ENCODE measurements at regions of chr2 and their contacts with region 1.

Region 1: DNA sequence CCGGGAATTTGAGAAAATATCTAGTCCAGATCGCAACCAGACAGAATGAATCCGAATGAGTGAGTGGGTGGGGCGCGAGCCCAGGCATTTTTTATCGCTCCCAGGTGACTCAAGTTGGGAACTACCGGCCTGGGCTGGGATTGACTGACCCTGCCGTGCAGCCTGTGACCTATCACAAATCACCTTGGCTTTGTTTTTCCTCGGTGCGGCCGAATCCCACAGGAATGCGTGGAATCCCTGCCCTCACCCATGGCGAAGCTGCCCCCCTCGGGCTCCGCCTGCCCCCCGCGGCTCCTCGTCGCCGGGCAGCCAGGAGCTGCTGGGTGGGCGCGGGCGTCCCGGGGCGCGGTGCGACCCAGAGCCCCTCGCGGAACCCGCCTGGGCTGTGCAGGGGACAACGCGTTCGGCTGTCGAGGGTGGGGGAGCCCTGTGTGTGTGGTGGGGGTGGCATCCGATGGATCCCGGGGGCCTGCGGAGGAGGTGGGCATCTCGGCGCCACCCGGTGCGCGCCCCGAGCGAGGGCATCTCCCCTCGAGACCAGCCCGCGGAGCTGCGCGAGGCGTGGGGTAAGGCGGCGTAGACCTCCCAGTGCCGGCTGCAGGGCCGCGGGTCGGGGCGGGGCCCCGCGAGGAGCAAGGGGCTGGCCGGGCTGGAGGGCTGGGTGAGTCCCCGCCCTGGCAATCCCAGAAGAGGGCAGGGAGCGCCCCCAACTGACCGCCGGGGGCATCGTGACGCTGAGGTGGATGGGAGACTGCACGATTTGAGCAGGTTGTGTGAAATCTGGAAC is 16.5 kb downstream of the B3GNT7 start:
- DNase-seq: peak; percentile 88 to 97
- H3K4me3 ChIP-seq: peak overlapping the region; percentile 46
- H3K4me1 ChIP-seq: peaks cover 37% of the 10 kb centered on the region
- H3K27me3 ChIP-seq: no peaks in the 10 kb centered on the region

Region 2: GRCh38 chr2:231104115-231104713 is 307.8 kb before region 1 on chr2:
- in situ Hi-C with region 1: loop called (anchors 5 kb)
- DNase-seq: peak; percentile 72 to 74
- H3K4me3 ChIP-seq: no peak overlapping the region
- H3K4me1 ChIP-seq: peaks cover 6% of the 10 kb centered on the region; the same call in 1 of the 2 replicates
- H3K27me3 ChIP-seq: no peaks in the 10 kb centered on the region

Region 3: DNA sequence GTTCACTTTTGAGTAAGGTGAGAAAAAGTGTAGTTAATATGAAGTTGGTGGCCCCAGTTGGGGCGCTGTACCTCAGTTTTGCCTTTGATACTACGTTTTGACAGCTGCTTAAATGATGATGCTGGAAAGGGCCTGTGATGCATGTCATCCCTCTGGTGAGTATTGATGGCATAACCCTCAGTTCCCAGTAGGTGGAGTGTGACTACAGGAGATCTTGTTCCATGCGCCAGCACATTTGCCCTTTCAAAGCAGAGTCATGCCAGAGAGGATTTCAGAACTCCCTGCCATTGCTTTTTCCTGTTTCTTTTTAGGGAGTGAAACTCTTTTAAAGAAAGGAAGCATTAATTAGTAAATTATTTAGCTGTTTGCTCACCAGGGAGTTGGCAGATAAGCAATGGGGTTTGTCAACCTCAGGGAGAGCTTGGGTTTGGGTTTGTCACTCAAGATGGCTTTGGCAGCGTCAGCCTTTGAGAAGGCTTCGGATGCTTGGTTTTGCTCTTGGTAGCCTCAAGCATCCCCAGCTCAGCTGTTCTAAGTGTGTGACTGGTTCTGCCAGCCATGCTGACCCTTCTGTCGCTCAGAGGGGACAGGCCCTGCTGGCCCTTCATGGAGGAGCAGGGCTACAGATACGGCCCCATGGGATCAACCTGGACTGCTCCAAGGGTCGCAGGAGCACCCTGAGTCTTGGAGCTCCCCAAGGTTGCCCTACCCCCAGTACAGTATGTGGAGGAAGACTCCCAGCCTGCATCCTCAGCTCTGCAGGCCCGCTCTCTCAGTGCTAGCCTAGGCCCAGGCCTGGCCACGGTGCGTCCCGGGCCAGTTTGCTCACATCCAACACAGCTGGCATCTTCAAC is 184.5 kb before region 1 on chr2:
- in situ Hi-C with region 1: loop called (anchors 5 kb)
- DNase-seq: peak; percentile 76 to 87
- H3K4me3 ChIP-seq: no peak overlapping the region
- H3K4me1 ChIP-seq: peaks cover 24% of the 10 kb centered on the region
- H3K27me3 ChIP-seq: no peaks in the 10 kb centered on the region

Region 4: DNA sequence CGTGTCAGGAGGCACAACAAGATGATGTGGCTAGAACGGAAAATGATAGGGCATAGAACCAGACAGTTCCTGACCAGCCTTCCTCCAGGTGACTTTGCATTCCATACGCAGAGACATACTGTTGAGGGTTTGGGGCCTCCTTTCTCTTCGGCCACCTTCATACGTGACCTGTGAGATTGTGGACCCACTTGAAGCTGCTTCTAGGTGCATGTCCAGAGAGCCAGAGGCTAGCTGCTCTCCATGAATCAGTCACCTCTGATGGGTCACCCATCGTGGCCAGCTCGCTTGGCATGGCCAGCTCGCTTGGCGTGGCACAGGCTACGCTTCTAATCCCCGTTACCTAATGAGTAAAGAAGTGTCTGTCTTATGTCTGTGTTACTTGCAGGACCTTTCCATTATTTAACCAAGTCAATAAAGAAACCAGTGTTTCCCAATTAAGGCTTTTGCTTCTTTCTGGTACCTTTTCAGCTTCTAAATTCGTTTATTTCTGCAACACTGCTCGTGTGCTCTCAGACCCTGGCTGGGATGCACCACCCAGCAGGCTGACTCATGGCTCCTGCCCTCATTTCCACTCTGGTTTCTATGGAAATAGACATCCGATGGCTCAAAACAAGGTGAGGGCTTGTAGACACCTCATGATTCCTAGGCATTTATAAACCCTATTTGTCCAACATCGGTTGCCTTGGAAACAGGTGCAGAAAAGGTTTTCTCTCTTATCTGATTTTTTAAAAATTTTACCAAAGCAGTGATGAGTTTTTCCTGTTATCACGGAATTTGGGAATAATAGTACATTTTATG is 103.2 kb before region 1 on chr2:
- in situ Hi-C with region 1: loop called (anchors 10 kb)
- DNase-seq: no peak
- H3K4me3 ChIP-seq: no peak overlapping the region
- H3K4me1 ChIP-seq: no peaks in the 10 kb centered on the region
- H3K27me3 ChIP-seq: no peaks in the 10 kb centered on the region

Region 5: DNA sequence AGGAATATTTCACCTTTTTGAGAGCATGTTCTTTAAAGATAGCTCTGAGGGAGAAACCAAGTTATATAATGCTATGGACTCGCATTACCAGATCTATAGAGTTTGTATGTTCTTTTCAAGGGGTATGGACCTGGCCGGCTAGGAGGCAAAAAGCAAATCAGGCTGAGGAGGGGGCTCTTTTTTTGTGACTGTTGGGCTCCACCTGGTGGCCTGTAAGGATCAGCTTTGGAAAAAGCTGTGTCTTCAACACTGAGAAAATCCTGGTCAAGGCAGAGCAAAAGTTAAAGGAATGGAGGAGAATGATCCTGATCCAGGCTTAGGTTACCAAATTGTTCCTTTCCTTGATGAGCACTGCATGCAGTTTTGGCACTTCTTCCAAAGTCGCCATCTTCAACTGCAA is 730.0 kb after region 1 on chr2:
- in situ Hi-C with region 1: no loop called
- DNase-seq: peak; percentile 51 to 62
- H3K4me3 ChIP-seq: no peak overlapping the region
- H3K4me1 ChIP-seq: no peaks in the 10 kb centered on the region
- H3K27me3 ChIP-seq: no peaks in the 10 kb centered on the region

Region 6: GRCh38 chr2:232327105-232328041 is 915.3 kb after region 1 on chr2:
- in situ Hi-C with region 1: no loop called
- DNase-seq: peak; percentile 4 to 89
- H3K4me3 ChIP-seq: no peak overlapping the region
- H3K4me1 ChIP-seq: no peaks in the 10 kb centered on the region
- H3K27me3 ChIP-seq: no peaks in the 10 kb centered on the region

Measured in HAP-1 (cell line).